SK-N-SH (cell line): ENCODE measurements at regions of chr16 and their contacts with region 1.

Region 1: GRCh38 chr16:2155091-2156021 is at the start of gene TRAF7:
- DNase-seq: peak; percentile 96
- H3K4me3 ChIP-seq: peak within 1 kb of the TSS; percentile 100
- H3K27ac ChIP-seq: peak within 1 kb of the TSS; percentile 61 to 89; a peak in 3 of 4 replicates
- H3K4me1 ChIP-seq: peaks cover 37 to 67% of the 10 kb centered on the region in 2 experiments; a peak in 3 of 4 replicates
- H3K27me3 ChIP-seq: no peaks in the 10 kb centered on the region
- CTCF ChIP-seq: no peak
- EP300 ChIP-seq: peak in 1 of 2 experiments; percentile 26; a peak in 1 of 4 replicates
- RAD21 ChIP-seq: no peak
- polyA plus RNA-seq, gene TRAF7: 69.9 and 73.0 TPM in 2 replicates

Region 2: DNA sequence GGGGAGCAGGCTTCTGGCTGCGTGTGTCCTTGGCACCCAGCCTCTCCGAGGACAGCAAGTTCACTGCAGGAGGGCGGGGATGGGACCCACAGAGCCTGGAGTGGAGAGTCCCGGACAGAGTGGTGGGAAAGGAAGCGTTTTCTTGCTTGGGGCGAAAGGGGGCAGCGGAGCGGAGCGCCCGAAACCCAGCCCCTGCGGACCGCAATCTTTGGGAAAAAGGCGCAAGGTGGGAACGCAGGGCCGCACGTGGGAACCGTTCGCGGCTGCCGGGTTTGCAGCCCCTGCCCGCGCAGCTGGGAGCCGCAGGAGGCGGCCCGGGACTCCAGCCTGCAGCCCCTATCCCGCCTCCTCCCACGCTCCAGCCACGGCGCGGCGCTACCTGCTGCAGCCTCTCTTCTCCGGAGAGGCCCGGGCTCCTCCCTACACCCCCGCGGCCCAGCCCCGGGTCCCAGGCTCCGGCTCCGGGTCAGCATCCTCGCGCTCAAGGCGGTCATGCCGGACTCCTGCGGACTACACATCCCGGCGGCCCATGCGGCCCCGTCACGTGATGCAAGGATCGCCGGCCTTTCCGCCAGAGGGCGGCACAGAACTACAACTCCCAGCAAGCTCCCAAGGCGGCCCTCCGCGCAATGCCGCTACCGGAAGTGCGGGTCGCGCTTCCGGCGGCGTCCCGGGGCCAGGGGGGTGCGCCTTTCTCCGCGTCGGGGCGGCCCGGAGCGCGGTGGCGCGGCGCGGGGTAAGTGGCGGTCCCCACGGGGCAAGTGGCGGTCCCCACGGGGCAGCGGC is 107.8 kb before region 1 on chr16 and contains the starts of genes NTHL1 and TSC2:
- CTCF ChIA-PET with region 1: interaction called, 16 read pairs
- POLR2A ChIA-PET with region 1: interaction called, 12 read pairs
- DNase-seq: peak; percentile 97
- H3K4me3 ChIP-seq: peak within 1 kb of the TSS; percentile 71 to 76
- H3K27ac ChIP-seq: peak within 1 kb of the TSS; percentile 33 to 69; a peak in 3 of 4 replicates
- H3K4me1 ChIP-seq: peaks cover 4 to 20% of the 10 kb centered on the region in 2 experiments; a peak in 3 of 4 replicates
- H3K27me3 ChIP-seq: no peaks in the 10 kb centered on the region
- CTCF ChIP-seq: peak; percentile 28; the same call in 1 of the 2 replicates
- EP300 ChIP-seq: no peak; a peak in 1 of 4 replicates
- RAD21 ChIP-seq: no peak; the same call in 1 of the 2 replicates
- polyA plus RNA-seq, gene NTHL1: 72.9 and 77.3 TPM in 2 replicates
- polyA plus RNA-seq, gene TSC2: 76.7 and 96.1 TPM in 2 replicates

Region 3: DNA sequence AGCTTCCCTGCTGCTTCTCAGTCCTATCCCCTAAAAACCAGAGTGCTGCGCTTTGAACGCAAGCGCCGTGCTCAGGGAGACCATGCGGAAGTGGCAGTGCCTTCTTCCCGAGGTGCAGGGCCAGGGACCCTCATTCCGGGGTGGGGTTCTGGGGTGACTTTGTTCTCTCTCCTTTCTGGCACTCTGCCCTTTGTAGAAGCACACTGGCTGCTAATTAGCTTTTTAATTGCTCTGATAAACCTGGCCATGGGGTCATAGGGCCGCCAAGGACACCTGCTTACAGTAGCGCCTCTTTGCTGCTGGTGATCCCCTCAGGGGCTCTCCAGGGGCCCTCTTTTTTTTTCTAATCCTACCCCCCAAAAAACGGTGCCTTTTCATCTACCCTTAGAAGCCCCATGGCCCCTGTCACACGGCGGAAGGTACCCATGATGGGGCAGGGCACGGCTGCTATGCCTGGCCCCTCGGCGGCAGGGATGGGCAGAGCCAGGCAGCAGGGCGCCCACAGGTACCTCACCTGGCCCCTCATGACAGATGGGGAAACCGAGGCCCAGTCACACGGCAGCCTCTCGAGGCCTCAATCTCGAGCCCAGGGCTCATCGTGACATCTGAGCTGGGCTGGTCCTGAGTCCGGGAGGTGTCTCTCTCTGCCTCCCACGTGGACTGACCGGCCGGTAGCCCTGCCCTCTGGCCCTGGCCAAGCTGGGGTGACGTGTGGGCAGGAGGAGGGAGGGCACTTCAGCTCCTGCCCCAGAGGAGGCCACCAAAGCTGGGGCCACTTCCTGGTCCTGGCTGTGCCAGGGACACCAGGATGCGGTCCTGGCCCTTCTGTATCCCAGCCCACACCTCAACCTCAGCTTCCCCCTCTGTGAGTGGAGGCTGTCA is 11.6 kb after region 1 on chr16:
- CTCF ChIA-PET with region 1: interaction called, 3 read pairs
- POLR2A ChIA-PET with region 1: interaction called, 16 read pairs
- DNase-seq: no peak
- H3K4me3 ChIP-seq: no peak overlapping the region
- H3K27ac ChIP-seq: no peak overlapping the region
- H3K4me1 ChIP-seq: no peaks in the 10 kb centered on the region
- H3K27me3 ChIP-seq: no peaks in the 10 kb centered on the region
- CTCF ChIP-seq: no peak
- EP300 ChIP-seq: no peak
- RAD21 ChIP-seq: no peak

Region 4: DNA sequence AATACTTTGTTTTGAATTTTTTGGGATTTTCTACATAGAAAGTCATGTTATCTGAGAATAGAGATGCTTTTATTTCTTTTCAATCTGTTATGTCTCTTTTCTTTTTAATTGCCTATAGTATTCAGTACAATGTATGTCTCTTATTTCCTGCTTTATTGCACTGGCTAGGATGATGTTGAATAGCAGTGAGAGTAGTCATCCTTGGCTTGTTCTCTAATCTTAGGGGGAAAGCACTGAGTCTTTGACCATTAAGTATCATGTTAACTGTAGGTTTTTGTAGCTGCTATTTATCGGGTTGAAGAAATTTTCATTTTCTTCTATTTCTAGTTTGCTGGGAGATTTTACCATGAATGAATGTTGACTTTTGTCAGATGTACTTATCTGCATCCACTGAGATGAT is 195.1 kb after region 1 on chr16:
- CTCF ChIA-PET with region 1: no interaction called
- POLR2A ChIA-PET with region 1: no interaction called
- DNase-seq: no peak
- H3K4me3 ChIP-seq: no peak overlapping the region
- H3K27ac ChIP-seq: no peak overlapping the region
- H3K4me1 ChIP-seq: no peaks in the 10 kb centered on the region
- H3K27me3 ChIP-seq: no peaks in the 10 kb centered on the region
- CTCF ChIP-seq: no peak
- EP300 ChIP-seq: no peak
- RAD21 ChIP-seq: no peak